ENCODE measurements at regions of chr1 and their contacts with region 1.

Region 1: GRCh38 chr1:39408641-39409054 is 82.8 kb upstream of the BMP8A start:
- DNase-seq: peak; percentile 94
- H3K4me3 ChIP-seq: peak overlapping the region; percentile 63 to 81 (median 71)
- H3K27ac ChIP-seq: peak overlapping the region; percentile 76
- H3K4me1 ChIP-seq: peaks cover 57% of the 10 kb centered on the region
- H3K27me3 ChIP-seq: no peaks in the 10 kb centered on the region
- CTCF ChIP-seq: no peak

Region 2: DNA sequence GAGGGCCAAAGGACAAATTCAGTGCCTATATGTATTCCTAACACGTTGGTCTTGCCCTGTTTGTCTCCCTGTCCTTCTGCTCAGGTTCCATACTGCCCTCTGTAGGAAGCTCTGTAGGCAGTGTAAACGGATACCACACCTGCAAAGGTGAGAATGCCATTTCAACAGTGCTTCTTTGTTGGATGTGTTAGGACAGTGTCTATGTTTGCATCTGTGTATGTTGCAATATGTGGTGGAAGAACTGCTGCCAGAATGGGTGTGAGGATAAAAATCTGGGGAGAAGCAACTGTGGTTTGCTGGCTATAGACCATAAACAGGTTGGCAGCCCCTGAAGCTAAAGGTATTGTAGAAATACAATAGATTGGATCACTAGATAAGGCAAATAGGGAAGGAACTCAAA is 30.3 kb before region 1 on chr1:
- CTCF ChIA-PET with region 1: interaction called, 20 read pairs
- dilution Hi-C with region 1: no loop called
- in situ Hi-C with region 1: no loop called
- intact Hi-C with region 1: loop called (anchors 1 kb)
- DNase-seq: peak; percentile 95
- H3K4me3 ChIP-seq: no peak overlapping the region
- H3K27ac ChIP-seq: peak overlapping the region; percentile 45
- H3K4me1 ChIP-seq: peaks cover 15% of the 10 kb centered on the region
- H3K27me3 ChIP-seq: no peaks in the 10 kb centered on the region
- CTCF ChIP-seq: peak; percentile 91

Region 3: GRCh38 chr1:39387452-39387851 is 21.2 kb before region 1 on chr1:
- CTCF ChIA-PET with region 1: interaction called, 11 read pairs
- dilution Hi-C with region 1: no loop called
- in situ Hi-C with region 1: no loop called
- intact Hi-C with region 1: loop called (anchors 2 kb)
- DNase-seq: peak; percentile 62
- H3K4me3 ChIP-seq: no peak overlapping the region
- H3K27ac ChIP-seq: no peak overlapping the region
- H3K4me1 ChIP-seq: peaks cover 28% of the 10 kb centered on the region
- H3K27me3 ChIP-seq: no peaks in the 10 kb centered on the region
- CTCF ChIP-seq: peak; percentile 30 to 43

Region 4: GRCh38 chr1:39398278-39399021 is 10.2 kb before region 1 on chr1:
- CTCF ChIA-PET with region 1: interaction called, 7 read pairs
- dilution Hi-C with region 1: no loop called
- in situ Hi-C with region 1: no loop called
- intact Hi-C with region 1: loop called (anchors 1 kb)
- DNase-seq: peak; percentile 96
- H3K4me3 ChIP-seq: peak overlapping the region in 1 of 3 experiments; percentile 30
- H3K27ac ChIP-seq: peak overlapping the region; percentile 99
- H3K4me1 ChIP-seq: peaks cover 59% of the 10 kb centered on the region
- H3K27me3 ChIP-seq: no peaks in the 10 kb centered on the region
- CTCF ChIP-seq: no peak